Aorta (tissue), 5 donors: ENCODE measurements at regions of chr9 and their contacts with region 1.

Region 1: GRCh38 chr9:122087406-122088200 is 5.5 kb downstream of the TTLL11 start:
- DNase-seq: peak in 1 of 2 donors; percentile 71
- ATAC-seq: peak; percentile 65
- H3K4me3 ChIP-seq: no peak overlapping the region
- H3K27ac ChIP-seq: peak overlapping the region; percentile 90 to 96
- H3K4me1 ChIP-seq: peaks cover 10 to 26% of the 10 kb centered on the region in 2 donors
- H3K27me3 ChIP-seq: no peaks in the 10 kb centered on the region

Region 2: GRCh38 chr9:122020398-122020797 is 67.2 kb before region 1 on chr9:
- intact Hi-C with region 1: loop called in 1 of 2 experiments (anchors 2 kb)
- DNase-seq: no peak
- ATAC-seq: peak; percentile 48
- H3K4me3 ChIP-seq: no peak overlapping the region
- H3K27ac ChIP-seq: peak overlapping the region; percentile 72 to 97
- H3K4me1 ChIP-seq: peaks cover 0 to 6% of the 10 kb centered on the region in 2 donors
- H3K27me3 ChIP-seq: no peaks in the 10 kb centered on the region

Region 3: GRCh38 chr9:123049589-123050222 is 962.1 kb after region 1 on chr9:
- intact Hi-C with region 1: loop called in 1 of 2 experiments (anchors 10 kb)
- DNase-seq: no peak
- ATAC-seq: peak; percentile 78
- H3K4me3 ChIP-seq: no peak overlapping the region
- H3K27ac ChIP-seq: peak overlapping the region; percentile 59 to 90
- H3K4me1 ChIP-seq: peaks cover 6 to 10% of the 10 kb centered on the region in 2 donors
- H3K27me3 ChIP-seq: no peaks in the 10 kb centered on the region